ENCODE measurements at regions of chr6 and their contacts with region 1.

Region 1: DNA sequence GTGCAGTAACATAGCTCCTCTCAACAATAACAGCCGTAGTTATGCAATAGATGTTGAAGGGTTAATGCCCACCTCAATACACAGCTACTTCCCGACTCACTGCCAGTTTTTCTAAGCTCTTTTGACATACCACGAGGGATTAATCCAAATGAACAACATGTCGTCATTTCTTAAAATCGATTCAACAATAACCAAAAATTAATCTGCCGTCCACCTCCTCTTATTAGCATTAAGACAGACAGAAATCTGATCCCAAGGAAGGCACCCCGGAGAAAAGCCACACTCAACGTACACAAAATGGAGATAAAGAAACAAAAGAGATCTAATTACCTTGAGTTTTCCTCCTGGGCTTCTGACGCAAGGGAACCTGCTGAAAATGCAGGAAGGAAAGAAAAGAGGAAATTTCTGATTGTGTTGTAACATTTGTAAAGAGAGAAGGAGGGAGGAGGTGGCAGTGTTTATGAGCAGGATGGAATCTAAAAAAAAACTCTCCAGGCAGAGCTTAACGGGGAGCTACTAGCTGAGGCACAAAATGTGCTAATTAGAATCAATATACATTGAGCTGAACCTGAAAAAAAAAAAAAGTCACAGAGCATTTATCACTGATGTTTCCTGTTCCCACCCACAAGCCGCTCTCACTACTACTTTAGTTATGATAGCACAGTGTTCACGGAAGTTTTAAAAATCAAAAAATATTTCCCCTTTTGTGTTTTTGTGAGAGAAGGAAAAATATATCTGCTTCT is 109.3 kb downstream of the IPCEF1 start:
- DNase-seq: peak in 6 of 9 donors; percentile 45 to 67 (median 56)
- ATAC-seq: peak; percentile 64
- H3K4me3 ChIP-seq: peak overlapping the region; percentile 62
- H3K4me3 Mint-ChIP-seq: peak overlapping the region; percentile 84 to 100 (median 96)
- H3K27ac ChIP-seq: peak overlapping the region; percentile 81
- H3K27ac Mint-ChIP-seq: peak overlapping the region; percentile 90 to 97 (median 96)
- H3K4me1 ChIP-seq: peaks cover 52 to 59% of the 10 kb centered on the region in 2 donors
- H3K4me1 Mint-ChIP-seq: peaks cover 59 to 81% (median 77%) of the 10 kb centered on the region in 7 donors
- H3K27me3 ChIP-seq: no peaks in the 10 kb centered on the region
- H3K27me3 Mint-ChIP-seq: peaks cover 0 to 14% (median 0%) of the 10 kb centered on the region in 5 donors

Region 2: GRCh38 chr6:153002607-153003365 is 1244.5 kb before region 1 on chr6 and contains the start of gene MTRF1L:
- CTCF ChIA-PET with region 1: no interaction called
- POLR2A ChIA-PET with region 1: no interaction called
- intact Hi-C with region 1: loop called in 1 of 2 experiments (anchors 10 kb)
- DNase-seq: peak; percentile 52 to 84 (median 70)
- ATAC-seq: peak; percentile 92
- H3K4me3 ChIP-seq: peak within 1 kb of the TSS; percentile 63
- H3K4me3 Mint-ChIP-seq: peak within 1 kb of the TSS; percentile 85 to 99 (median 96)
- H3K27ac ChIP-seq: peak within 1 kb of the TSS; percentile 73
- H3K27ac Mint-ChIP-seq: peak within 1 kb of the TSS; percentile 86 to 98 (median 93)
- H3K4me1 ChIP-seq: peaks cover 18% of the 10 kb centered on the region in 2 donors
- H3K4me1 Mint-ChIP-seq: peaks cover 24 to 59% (median 49%) of the 10 kb centered on the region in 7 donors
- H3K27me3 ChIP-seq: no peaks in the 10 kb centered on the region
- H3K27me3 Mint-ChIP-seq: peaks cover 0 to 18% (median 0%) of the 10 kb centered on the region in 5 donors
- total RNA-seq, gene MTRF1L: 8.9 to 18.1 (median 13.5) TPM

Region 3: DNA sequence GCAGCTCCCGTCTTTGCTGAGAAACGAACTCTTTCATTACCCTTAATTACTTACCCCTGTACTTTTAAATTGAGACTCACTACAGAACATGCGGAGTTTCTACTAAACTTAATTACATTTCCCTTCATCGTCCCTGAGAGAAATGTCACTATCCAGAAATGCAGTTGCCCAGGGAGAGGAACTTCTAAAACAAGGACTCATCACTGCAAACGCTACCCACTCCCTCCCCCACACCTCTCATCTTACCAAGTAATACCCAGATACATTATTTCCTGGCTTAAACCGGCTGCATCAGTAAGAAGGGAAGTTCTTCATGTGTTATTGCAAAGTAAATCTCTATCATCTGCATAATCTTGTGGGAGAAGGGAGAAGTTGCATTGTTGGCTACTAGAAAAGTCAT is 29.0 kb before region 1 on chr6:
- CTCF ChIA-PET with region 1: interaction called, 10 read pairs
- POLR2A ChIA-PET with region 1: interaction called, 17 read pairs
- intact Hi-C with region 1: loop called in 1 of 2 experiments (anchors 1 kb)
- DNase-seq: peak in 3 of 9 donors; percentile 17 to 34 (median 33)
- ATAC-seq: peak; percentile 54
- H3K4me3 ChIP-seq: no peak overlapping the region
- H3K4me3 Mint-ChIP-seq: peak overlapping the region in 9 of 10 donors; percentile 39 to 86 (median 78)
- H3K27ac ChIP-seq: peak overlapping the region; percentile 38
- H3K27ac Mint-ChIP-seq: peak overlapping the region in 8 of 9 donors; percentile 66 to 96 (median 88)
- H3K4me1 ChIP-seq: peaks cover 0 to 45% of the 10 kb centered on the region in 2 donors
- H3K4me1 Mint-ChIP-seq: peaks cover 22 to 79% (median 72%) of the 10 kb centered on the region in 7 donors
- H3K27me3 ChIP-seq: no peaks in the 10 kb centered on the region
- H3K27me3 Mint-ChIP-seq: no peaks in the 10 kb centered on the region

Region 4: DNA sequence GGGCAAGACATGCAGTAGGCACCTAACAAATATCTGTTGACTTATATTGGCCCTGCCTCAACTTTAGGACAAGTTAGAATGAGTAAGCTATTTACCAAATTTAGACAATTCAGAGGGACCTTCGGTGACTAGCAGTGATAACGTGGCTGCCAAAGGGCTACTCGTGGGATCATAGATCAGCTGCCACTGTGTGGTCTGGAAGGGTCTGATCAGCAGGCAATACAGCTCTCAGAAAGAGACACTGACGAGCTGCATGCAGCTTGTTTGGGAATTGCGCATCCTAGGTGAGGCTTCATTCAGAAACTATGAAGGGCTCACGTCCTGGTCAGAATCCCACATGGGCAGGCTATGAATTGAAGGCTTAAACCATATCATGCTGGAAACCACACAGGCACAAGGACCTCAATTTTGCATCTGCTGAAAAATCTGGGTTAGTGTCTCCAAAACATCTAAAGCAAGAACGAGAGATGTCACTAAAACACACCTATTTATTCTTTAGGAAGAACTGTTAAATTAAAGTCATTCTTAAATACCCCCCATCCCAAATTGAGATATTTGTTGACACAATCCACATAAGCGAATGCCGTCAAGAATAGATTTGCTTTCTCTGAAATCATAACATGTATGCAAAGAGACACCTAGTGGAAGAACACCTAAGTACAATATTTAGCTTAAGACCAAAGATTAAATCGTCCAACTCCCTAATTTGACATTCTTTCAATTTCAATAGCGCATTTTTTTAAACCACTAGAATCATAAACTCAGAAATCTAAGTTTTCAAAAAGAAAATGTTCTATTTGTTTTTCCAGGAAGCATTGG is 29.7 kb after region 1 on chr6:
- CTCF ChIA-PET with region 1: interaction called, 39 read pairs
- POLR2A ChIA-PET with region 1: interaction called, 13 read pairs
- intact Hi-C with region 1: loop called (anchors 1 kb)
- DNase-seq: peak in 7 of 9 donors; percentile 28 to 68 (median 58)
- ATAC-seq: peak; percentile 84
- H3K4me3 ChIP-seq: peak overlapping the region; percentile 23
- H3K4me3 Mint-ChIP-seq: peak overlapping the region; percentile 59 to 91 (median 68)
- H3K27ac ChIP-seq: peak overlapping the region; percentile 27
- H3K27ac Mint-ChIP-seq: peak overlapping the region in 8 of 9 donors; percentile 44 to 75 (median 64)
- H3K4me1 ChIP-seq: peaks cover 5 to 27% of the 10 kb centered on the region in 2 donors
- H3K4me1 Mint-ChIP-seq: peaks cover 20 to 50% (median 44%) of the 10 kb centered on the region in 7 donors
- H3K27me3 ChIP-seq: no peaks in the 10 kb centered on the region
- H3K27me3 Mint-ChIP-seq: peaks cover 0 to 16% (median 0%) of the 10 kb centered on the region in 5 donors

Region 5: DNA sequence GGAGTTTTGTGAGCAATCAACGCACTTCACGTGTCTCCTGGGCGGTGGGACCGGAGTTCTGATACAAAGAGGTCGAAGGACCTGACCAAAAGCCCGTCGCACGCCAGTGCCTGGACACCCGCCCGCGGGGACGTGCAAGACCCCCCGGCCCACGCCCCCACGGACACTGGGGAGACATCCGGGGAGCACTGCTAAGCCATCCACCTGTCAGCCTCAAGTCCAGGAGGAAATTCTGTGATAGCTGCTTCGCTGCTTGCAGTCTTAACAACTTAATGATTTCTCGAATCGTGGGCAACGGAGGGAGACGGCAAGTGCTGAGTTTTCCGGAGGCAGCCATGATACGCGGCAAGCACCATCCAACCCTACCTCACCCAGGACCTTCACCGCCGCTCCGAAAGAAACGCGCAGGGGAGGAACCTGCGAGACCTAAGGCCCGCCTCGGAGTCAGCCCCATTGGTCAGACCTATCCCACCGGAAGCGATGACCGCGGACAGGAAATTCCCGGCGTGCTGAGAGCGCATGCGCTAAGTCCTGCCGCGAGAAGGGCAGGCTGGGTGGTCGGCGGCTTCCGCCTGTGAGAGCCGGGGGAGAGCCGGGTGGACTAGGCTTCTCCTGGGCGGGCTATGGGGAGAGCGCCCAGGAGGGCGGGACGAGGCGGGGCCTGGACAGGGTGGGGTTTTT is 1066.9 kb after region 1 on chr6 and contains the start of gene TFB1M:
- CTCF ChIA-PET with region 1: no interaction called
- POLR2A ChIA-PET with region 1: no interaction called
- intact Hi-C with region 1: loop called in 1 of 2 experiments (anchors 10 kb)
- DNase-seq: peak; percentile 84 to 98 (median 94)
- ATAC-seq: peak; percentile 96
- H3K4me3 ChIP-seq: peak within 1 kb of the TSS; percentile 86
- H3K4me3 Mint-ChIP-seq: peak within 1 kb of the TSS; percentile 80 to 98 (median 96)
- H3K27ac ChIP-seq: peak within 1 kb of the TSS; percentile 90
- H3K27ac Mint-ChIP-seq: peak within 1 kb of the TSS; percentile 84 to 97 (median 93)
- H3K4me1 ChIP-seq: peaks cover 3 to 5% of the 10 kb centered on the region in 2 donors
- H3K4me1 Mint-ChIP-seq: peaks cover 10 to 48% (median 41%) of the 10 kb centered on the region in 7 donors
- H3K27me3 ChIP-seq: no peaks in the 10 kb centered on the region
- H3K27me3 Mint-ChIP-seq: no peaks in the 10 kb centered on the region
- total RNA-seq, gene TFB1M: 20.5 to 45.4 (median 29.7) TPM

Measured in naive thymus-derived CD4-positive, alpha-beta T cell (primary cell).